OCI-LY7 (cell line): ENCODE measurements at regions of chr16 and their contacts with region 1.

Region 1: DNA sequence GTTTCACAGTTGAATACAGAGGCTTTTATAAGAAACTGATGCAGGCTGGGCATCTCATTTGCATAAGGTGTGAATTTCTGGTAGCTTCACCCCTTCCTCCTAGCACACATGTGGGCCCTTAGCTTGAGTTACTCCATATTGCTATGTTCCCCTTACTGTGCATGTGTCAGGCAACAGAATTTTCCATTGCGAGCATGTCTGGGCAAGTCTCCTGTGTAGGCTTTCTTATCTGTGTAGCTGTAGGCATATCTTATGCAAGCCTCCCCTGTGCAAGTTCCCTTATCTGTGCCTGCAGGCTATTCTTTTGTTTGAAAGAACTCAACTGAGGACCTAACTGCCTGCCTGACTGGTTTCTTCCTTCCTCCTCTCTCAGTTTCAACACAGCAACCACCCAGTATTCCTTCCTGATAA is 597.4 kb upstream of the CDH5 start:
- DNase-seq: peak; percentile 51
- H3K4me3 ChIP-seq: no peak overlapping the region
- H3K27ac ChIP-seq: peak overlapping the region; percentile 52
- H3K4me1 ChIP-seq: peaks cover 52% of the 10 kb centered on the region
- CTCF ChIP-seq: no peak

Region 2: GRCh38 chr16:65909310-65910050 is 140.4 kb after region 1 on chr16:
- CTCF ChIA-PET with region 1: no interaction called
- POLR2A ChIA-PET with region 1: no interaction called
- intact Hi-C with region 1: loop called (anchors 10 kb)
- DNase-seq: peak; percentile 76
- H3K4me3 ChIP-seq: no peak overlapping the region
- H3K27ac ChIP-seq: no peak overlapping the region
- H3K4me1 ChIP-seq: peaks cover 24% of the 10 kb centered on the region
- CTCF ChIP-seq: no peak